Left lung (tissue), 14 donors: ENCODE measurements at regions of chr3 and their contacts with region 1.

Region 1: DNA sequence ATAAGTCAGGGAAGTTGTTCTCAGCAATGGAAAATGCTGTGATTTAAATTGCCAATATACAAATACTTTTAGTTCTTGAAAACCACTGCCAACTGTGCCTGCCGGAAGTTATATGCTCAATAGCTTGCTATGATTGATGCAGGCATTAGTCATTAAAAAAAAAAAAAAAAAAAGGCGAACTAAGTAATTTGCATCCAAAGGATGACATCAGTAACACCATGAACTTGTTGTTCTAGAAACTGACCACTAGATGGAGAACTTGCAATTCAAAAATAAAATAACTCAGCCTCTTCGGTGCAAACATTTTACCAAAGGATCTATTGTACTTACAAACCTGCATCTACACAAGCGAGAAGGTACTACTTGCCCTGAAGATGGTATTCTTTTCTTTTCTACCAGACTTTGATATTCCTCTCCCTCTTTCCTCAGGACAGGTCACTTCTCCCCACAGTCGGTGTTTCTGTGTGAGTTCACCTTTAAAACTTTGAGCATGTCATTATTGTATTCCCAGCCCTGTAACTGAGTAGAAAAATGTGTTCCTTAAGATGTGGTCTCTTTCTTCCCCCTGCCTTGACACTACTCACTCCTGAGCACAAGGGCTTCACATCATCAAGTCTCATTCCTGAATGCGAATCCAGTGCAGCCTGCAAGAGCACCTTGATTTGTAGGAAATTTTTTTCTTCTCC is 115.0 kb upstream of the VEPH1 start:
- DNase-seq: peak in 2 of 4 donors; percentile 53 to 54
- ATAC-seq: peak; percentile 83
- H3K4me3 ChIP-seq: no peak overlapping the region
- H3K27ac ChIP-seq: no peak overlapping the region
- H3K4me1 ChIP-seq: no peaks in the 10 kb centered on the region
- H3K27me3 ChIP-seq: peaks cover 0 to 8% of the 10 kb centered on the region in 2 donors
- CTCF ChIP-seq: peak; percentile 47 to 67

Region 2: GRCh38 chr3:158434412-158435038 is 816.3 kb after region 1 on chr3:
- intact Hi-C with region 1: loop called in 1 of 2 experiments (anchors 10 kb)
- DNase-seq: peak in 3 of 4 donors; percentile 33 to 67 (median 42)
- ATAC-seq: peak; percentile 85
- H3K4me3 ChIP-seq: no peak overlapping the region
- H3K27ac ChIP-seq: no peak overlapping the region
- H3K4me1 ChIP-seq: no peaks in the 10 kb centered on the region
- H3K27me3 ChIP-seq: no peaks in the 10 kb centered on the region
- CTCF ChIP-seq: peak; percentile 48 to 59